ENCODE measurements at regions of chr19 and their contacts with region 1.

Region 1: DNA sequence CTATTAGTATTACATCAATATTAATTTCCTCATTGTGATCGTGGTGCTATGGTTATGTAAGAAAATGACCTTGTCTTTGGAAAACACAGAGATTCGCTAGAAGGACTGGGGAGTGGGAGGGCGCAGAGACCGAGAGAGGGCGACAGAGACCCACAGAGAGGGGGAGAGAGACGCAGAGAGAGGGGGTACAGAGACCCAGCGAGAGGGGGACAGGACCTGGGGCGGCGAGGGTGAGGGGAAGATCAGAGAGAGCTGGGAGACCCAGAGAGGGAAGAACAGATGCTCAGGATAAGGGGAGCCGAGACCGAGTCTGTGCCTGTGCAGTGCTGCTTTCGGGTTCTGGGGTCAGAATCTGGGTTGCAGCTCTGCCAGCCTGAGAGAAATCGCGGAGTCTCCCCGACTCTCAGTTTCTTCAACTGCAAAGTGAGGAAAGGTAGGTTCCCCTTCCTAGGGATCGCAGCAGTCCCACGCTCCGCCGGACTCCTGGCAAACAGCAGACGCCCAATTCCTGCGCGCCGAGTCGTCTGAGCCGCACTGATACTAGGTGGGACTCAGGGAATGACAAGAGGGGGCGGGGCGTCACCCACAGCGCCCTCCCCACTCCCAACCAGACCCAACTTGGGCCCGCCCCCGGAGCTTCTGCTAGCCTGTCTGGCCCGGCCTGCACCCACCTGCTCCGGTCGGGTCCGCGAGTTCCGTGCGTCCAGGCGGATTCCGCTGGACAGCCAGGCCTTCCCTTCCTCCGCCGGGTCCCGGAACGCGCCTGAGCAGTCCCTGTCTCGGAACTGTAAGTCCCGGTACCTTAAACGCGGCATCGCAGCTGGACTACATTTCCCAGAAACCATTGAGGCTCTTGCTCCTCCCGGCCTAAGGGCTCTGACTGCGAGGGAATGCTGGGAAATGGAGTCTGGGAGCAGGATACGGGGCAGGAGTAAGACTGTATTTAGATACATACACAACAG is 15.3 kb downstream of the IZUMO2 start:
- DNase-seq: peak; percentile 89 to 93
- ATAC-seq: peak; percentile 96 to 98 (median 96)
- H3K4me3 ChIP-seq: peak overlapping the region; percentile 78
- H3K27ac ChIP-seq: peak overlapping the region; percentile 78
- H3K4me1 ChIP-seq: no peaks in the 10 kb centered on the region
- H3K27me3 ChIP-seq: no peaks in the 10 kb centered on the region
- CTCF ChIP-seq: peak; percentile 44

Region 2: DNA sequence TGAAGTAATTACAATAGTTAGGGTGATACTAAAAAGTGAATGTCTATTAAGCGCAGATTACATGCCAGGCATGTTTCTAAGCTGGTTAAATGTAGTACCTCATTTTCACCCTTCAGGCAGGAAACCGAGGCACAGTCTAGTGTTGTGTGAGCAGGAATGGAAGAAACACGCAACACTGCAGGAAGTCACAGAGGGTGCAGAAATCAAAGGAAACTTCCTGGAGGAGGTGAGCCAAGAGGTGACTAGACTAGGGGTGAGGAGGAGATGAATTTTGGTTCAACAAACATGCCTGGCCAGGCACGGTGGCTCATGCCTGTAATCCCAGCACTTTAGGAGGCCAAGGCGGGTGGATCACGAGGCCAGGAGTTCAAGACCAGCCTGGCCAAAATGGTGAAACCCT is 80.2 kb before region 1 on chr19:
- intact Hi-C with region 1: no loop called
- DNase-seq: no peak
- ATAC-seq: no peak
- H3K4me3 ChIP-seq: no peak overlapping the region
- H3K27ac ChIP-seq: no peak overlapping the region
- H3K4me1 ChIP-seq: no peaks in the 10 kb centered on the region
- H3K27me3 ChIP-seq: no peaks in the 10 kb centered on the region
- CTCF ChIP-seq: no peak

Region 3: DNA sequence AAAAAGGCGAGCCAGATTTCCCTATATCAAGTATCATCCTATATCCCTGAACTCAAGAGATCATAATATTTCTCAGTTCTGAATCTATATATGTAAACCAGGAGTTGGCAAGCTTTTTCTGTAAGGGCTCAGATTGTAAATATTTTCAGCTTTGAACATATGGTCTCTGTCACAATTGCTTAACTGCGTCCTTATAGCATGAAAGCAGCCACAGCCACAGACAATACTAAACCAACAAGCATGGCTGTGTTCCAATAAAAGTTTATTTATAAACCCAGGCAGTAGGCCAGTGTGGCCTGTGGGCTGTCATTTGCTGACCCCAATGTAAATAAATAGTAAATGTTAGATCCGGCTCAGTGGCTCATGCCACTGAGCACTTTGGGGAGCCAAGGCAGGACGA is 43.5 kb after region 1 on chr19:
- intact Hi-C with region 1: no loop called
- DNase-seq: no peak
- ATAC-seq: peak in 3 of 4 donors; percentile 37 to 70 (median 54)
- H3K4me3 ChIP-seq: no peak overlapping the region
- H3K27ac ChIP-seq: no peak overlapping the region
- H3K4me1 ChIP-seq: peaks cover 8% of the 10 kb centered on the region
- H3K27me3 ChIP-seq: peaks cover 0 to 10% (median 1%) of the 10 kb centered on the region in 3 donors
- CTCF ChIP-seq: no peak

Region 4: GRCh38 chr19:50203281-50204080 is 55.7 kb after region 1 on chr19 and contains the start of gene MYH14:
- intact Hi-C with region 1: loop called in 1 of 2 experiments (anchors 10 kb)
- DNase-seq: peak; percentile 91 to 97
- ATAC-seq: peak; percentile 91 to 95 (median 93)
- H3K4me3 ChIP-seq: peak within 1 kb of the TSS; percentile 84
- H3K27ac ChIP-seq: peak within 1 kb of the TSS; percentile 95
- H3K4me1 ChIP-seq: peaks cover 23% of the 10 kb centered on the region
- H3K27me3 ChIP-seq: no peaks in the 10 kb centered on the region
- CTCF ChIP-seq: no peak
- total RNA-seq, gene MYH14: 164 to 298 (median 192) TPM

Region 5: DNA sequence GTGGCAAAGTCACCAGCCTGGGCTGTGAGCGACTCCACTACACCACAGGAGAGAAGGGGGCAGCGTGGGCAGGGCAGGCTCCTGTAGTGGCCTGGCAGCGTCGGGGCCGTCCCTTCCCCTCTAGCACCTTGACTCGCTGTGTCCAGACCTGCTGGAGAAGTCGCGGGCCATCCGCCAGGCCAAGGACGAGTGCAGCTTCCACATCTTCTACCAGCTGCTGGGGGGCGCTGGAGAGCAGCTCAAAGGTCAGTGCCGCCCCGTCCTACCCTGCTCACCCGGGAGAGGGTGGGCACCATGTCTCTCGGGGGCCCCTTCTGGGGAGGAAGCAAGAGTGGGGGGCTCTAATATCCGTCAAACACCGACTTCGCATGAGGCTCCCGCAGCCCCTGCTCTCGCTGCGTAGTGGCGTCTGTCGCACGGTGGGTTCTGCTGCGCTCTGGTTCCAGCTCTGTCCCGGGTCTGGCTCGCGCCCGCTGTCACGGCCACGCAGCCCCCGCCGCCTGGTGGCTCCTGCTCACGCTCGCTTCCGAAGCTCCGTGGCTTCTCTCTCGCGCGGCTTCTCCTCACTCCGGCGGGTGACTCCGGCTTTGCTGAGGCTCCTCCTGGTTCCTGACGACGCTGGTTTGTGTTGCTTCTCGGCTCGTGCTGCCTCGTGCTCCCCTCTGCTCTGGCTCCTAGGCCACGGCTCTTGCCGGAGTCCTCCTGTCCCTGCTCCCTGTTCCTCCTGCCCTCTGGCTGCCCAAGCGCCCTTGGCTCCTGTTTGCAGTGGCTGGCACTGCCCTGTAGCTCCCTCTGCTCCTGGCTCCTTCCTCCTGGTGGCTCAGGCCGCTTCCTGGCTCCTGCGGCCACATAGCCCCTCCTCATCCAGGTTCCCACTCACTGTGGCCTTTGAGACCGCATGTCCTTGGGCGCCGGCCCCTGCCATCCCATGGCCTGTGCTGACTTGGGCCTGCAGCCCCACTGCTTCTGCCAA is 82.9 kb after region 1 on chr19:
- intact Hi-C with region 1: loop called in 1 of 2 experiments (anchors 10 kb)
- DNase-seq: no peak
- ATAC-seq: no peak
- H3K4me3 ChIP-seq: no peak overlapping the region
- H3K27ac ChIP-seq: peak overlapping the region; percentile 30
- H3K4me1 ChIP-seq: peaks cover 14% of the 10 kb centered on the region
- H3K27me3 ChIP-seq: no peaks in the 10 kb centered on the region
- CTCF ChIP-seq: no peak

Measured in psoas muscle (tissue), 8 donors.